Colonic mucosa (tissue), 4 donors: ENCODE measurements at regions of chr1 and their contacts with region 1.

Region 1: DNA sequence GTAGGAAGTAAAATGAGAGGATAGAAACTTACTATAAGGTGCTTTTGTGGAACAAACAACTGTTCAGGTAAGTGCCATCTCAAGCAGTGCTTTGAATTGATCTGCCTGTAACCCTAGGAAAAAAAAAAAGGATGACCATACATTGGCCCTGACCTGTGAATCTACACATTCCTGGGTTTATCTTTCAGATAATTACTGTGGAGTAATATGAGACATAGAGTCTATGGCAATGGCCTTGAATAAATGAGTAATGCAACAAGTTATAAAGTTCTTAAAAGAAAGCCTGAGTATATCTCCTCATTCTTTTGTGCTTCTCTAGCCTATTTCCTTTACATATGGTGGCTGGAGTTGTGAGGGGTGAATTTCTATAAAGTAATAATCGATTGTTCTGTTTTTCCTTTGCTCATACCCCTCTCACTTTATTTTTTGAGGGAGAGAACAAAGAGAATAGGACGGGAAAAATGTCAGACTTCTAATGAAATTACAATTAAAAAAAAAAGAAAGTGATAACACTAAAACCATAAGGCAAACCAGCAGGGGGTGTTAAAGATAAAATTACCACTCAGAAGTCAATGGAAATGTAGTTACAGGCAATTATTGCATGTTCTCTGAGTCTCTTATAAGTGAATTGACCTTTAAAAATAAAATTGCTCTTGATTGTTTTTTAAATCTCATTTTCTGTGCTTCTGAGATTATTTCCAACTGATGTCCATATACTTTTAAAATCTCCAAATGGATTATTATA is 12.4 kb upstream of the ATP1A1 start:
- DNase-seq: no peak
- H3K4me3 ChIP-seq: no peak overlapping the region
- H3K27ac ChIP-seq: no peak overlapping the region
- H3K4me1 ChIP-seq: no peaks in the 10 kb centered on the region
- H3K27me3 ChIP-seq: no peaks in the 10 kb centered on the region
- CTCF ChIP-seq: no peak

Region 2: DNA sequence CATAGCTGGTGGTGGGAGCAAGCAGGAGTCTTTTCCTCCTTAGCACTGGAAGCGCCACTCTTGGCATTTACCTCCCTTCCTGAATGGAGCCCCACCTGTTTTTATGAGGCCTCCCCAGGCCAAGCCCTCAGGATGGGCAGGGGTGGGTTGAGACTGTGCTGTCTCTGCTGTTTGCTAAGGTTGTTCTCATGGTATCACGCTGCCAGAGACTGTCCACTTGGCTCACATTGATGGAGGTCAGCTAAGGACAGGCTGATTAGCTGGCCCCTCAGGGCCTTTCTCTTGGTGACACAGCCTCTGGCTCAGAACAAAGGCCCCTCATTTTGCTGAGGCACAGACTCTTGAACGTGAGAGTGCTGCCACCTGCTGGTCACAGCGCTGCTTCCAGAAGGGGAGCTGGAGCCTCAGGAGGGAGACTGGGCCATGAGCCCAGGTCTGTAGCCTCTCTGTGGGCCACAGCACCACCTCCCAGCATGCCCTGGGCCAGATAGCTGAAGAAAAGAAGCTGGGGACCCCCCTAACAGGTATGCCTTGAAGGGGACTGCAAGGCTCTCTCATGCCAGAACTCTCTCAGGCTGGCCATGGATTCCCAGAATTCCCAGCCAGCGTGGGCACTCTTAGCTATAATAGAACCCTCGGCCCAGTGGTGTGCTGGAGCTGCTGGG is 124.6 kb after region 1 on chr1:
- intact Hi-C with region 1: loop called (anchors 5 kb)
- DNase-seq: peak; percentile 94
- H3K4me3 ChIP-seq: no peak overlapping the region
- H3K27ac ChIP-seq: peak overlapping the region; percentile 59
- H3K4me1 ChIP-seq: peaks cover 16% of the 10 kb centered on the region
- H3K27me3 ChIP-seq: no peaks in the 10 kb centered on the region
- CTCF ChIP-seq: peak; percentile 90